Kidney (tissue), 22 donors: ENCODE measurements at regions of chr1 and their contacts with region 1.

Region 1: GRCh38 chr1:2212542-2213491 is 15.3 kb upstream of the SKI start:
- DNase-seq: peak; percentile 95 to 98 (median 97)
- H3K4me3 ChIP-seq: peak overlapping the region in 2 of 3 donors; percentile 0 to 46
- H3K27ac ChIP-seq: peak overlapping the region; percentile 96 to 97
- H3K4me1 ChIP-seq: peaks cover 0 to 46% (median 35%) of the 10 kb centered on the region in 3 donors
- H3K27me3 ChIP-seq: no peaks in the 10 kb centered on the region
- CTCF ChIP-seq: no peak

Region 2: GRCh38 chr1:2314803-2315673 is 102.2 kb after region 1 on chr1:
- intact Hi-C with region 1: loop called (anchors 10 kb)
- DNase-seq: peak; percentile 85 to 93 (median 90)
- H3K4me3 ChIP-seq: no peak overlapping the region
- H3K27ac ChIP-seq: peak overlapping the region in 1 of 2 donors; percentile 71
- H3K4me1 ChIP-seq: peaks cover 0 to 21% (median 0%) of the 10 kb centered on the region in 3 donors
- H3K27me3 ChIP-seq: no peaks in the 10 kb centered on the region
- CTCF ChIP-seq: peak; percentile 67

Region 3: GRCh38 chr1:2391041-2391930 is 178.5 kb after region 1 on chr1 and contains the starts of genes MORN1 and RER1:
- intact Hi-C with region 1: no loop called
- DNase-seq: peak; percentile 99 to 100 (median 99)
- H3K4me3 ChIP-seq: peak within 1 kb of the TSS; percentile 83 to 92 (median 85)
- H3K27ac ChIP-seq: peak within 1 kb of the TSS; percentile 75 to 85
- H3K4me1 ChIP-seq: peaks cover 0 to 31% (median 17%) of the 10 kb centered on the region in 3 donors
- H3K27me3 ChIP-seq: no peaks in the 10 kb centered on the region
- CTCF ChIP-seq: peak; percentile 13
- total RNA-seq, gene MORN1: 24.7 TPM
- total RNA-seq, gene RER1: 162 TPM